ENCODE measurements at regions of chr17 and their contacts with region 1.

Region 1: GRCh38 chr17:75877752-75878173 is 618 bp downstream of the TRIM47 start:
- DNase-seq: peak; percentile 73
- CTCF ChIP-seq: peak; percentile 56

Region 2: DNA sequence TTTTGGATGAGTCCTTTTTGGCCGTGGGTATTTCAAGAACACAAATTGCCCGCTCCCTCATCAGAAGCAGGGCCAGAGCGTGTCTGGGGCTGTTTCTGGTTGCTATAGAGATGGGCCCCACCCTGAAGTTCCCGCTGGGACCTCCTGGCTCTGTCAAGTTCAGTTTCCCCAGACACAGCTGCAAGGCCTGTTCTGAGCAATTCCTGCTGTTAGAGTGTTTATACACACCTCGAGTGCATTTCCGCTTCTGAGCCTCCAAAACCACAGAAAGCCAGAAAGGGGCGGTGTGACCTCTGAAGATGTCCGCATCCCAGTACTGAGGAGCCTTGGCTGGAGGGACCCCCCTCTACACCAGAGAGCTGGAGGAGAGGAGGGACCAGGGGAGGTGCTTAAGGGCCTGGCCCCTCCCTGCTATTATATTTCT is 13.3 kb before region 1 on chr17:
- CTCF ChIA-PET with region 1: interaction called, 89 read pairs
- POLR2A ChIA-PET with region 1: interaction called, 3 read pairs
- DNase-seq: peak; percentile 79
- CTCF ChIP-seq: no peak

Region 3: DNA sequence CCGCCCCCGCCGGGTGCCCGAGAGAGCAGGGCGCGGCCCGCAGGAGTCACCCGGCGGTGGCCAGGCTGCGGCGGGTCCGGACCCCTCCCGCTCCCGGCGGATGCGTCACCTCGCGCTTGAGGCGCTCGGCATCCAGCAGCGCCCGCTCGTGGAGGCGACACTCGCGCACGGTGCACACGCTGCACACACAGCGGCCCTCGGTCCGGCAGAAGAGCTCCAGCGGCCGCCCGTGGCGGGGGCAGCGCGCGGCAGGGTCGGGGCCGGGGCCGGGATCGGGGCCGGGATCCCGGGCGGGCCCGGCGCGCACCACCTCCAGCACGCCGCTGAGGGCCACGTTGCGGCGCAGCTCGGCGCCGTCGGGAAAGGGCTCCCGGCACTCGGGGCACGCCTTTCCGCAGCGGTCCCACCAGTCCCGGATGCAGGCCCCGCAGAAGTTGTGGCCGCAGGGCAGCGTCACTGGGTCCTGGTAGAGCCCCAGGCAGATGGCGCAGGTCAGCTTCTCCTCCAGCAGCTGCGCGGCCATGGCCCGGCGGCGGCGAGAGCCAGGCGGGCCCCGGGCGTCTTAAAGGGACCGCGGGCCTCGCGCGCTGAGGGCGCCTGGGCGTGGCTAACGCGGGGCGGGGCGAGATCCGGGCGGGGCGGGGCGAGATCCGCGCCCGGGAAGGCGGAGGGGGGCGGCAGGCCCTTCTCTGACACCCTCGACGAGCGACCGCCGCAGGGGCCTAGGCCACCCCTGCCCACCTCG is 18.8 kb after region 1 on chr17 and contains the start of gene TRIM65:
- CTCF ChIA-PET with region 1: interaction called, 15 read pairs
- POLR2A ChIA-PET with region 1: interaction called, 4 read pairs
- DNase-seq: peak; percentile 92
- CTCF ChIP-seq: peak; percentile 69

Region 4: DNA sequence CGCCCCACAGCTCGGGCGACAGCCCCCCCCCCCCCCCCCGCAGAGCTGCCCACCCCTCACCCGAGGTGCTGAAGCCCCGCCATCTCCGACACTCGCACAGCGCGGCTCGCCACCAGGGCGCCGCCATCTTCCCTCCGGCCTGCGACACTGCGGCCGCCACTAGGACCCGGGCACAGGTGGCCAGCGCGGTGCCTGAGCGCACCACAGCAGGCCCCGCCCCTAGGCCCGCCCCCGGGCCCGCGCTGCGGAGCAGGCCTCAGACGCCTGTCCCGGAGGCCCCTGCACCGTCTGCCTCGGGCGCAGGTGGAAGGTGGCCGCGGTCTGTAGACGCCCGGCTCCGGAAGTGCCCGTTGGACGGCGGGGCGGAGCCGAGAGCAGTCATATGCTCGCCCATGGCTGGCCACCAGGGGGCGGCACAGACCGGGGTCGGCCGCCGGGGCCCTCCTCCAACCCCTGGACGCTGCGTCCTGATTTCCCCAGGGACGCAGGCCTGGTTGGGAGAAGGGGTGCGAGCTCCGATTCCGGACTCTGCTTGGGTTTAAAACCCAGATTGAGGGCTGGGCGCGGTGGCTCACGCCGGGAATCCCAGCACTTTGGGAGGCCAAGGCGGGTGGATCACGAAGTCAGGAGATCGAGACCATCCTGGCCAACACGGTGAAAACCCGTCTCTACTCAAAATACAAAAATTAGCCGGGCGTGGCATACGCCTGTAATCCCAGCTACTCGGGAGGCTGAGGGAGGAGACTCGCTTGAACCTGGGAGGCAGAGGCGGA is 27.2 kb after region 1 on chr17 and contains the start of gene MRPL38:
- CTCF ChIA-PET with region 1: interaction called, 13 read pairs
- POLR2A ChIA-PET with region 1: no interaction called
- DNase-seq: peak; percentile 99
- CTCF ChIP-seq: peak; percentile 87